GM12878 (cell line): ENCODE measurements at regions of chr1 and their contacts with region 1.

Region 1: DNA sequence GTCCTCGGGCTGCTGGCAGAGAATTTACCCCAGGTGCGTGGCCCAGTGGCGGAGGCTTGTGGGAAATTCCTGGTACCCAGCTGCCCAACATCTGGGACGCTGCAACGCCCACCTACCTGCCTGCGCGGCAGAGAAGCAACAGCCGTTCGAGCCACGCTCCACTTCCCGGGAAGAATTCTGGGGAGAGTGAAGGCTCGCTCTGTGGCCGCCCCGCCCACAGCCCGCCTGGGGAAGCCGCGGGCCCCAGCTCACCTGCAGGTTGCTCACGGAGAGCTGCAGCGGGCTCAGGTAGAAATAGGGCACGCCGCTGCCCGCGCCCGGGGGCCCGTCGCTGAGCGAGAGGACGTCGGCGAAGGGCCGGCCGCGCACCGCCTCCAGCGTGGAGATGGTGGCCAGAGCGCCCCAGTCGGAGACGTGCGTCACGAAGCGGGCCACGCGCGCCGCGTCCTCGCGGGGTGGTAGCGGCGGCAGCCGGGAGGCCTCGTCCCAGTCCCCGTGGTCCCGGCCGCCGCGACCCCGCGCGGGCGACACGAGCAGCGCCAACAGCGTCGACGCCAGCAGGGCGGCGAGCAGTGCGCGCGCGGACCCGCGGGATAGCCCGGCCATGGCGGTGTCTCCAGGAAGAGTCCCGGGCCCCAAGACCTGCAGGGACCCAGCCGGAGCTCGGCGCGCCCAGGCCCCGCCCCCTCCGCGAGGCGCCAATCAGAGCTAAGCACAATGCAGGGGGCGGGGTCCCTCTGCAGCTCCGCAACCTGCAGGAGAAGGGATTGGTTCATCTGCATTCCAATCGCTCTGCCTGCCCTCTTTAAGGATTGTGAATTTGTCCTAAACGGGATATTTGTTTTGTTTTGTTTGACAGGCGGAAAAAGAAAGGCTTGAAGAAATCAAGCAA is at the start of gene CREG1:
- DNase-seq: no peak
- ATAC-seq: peak; percentile 97
- H3K4me3 ChIP-seq: peak within 1 kb of the TSS; percentile 72
- H3K27ac ChIP-seq: peak within 1 kb of the TSS; percentile 51
- H3K4me1 ChIP-seq: peaks cover 9% of the 10 kb centered on the region
- H3K27me3 ChIP-seq: no peaks in the 10 kb centered on the region
- CTCF ChIP-seq: no peak
- EP300 ChIP-seq: no peak
- POLR2A ChIP-seq: peak; percentile 93
- RAD21 ChIP-seq: no peak
- polyA plus RNA-seq, gene CREG1: 5.3 to 11.3 TPM

Region 2: GRCh38 chr1:167510244-167510643 is 43.1 kb before region 1 on chr1:
- CTCF ChIA-PET with region 1: no interaction called
- POLR2A ChIA-PET with region 1: no interaction called
- RAD21 ChIA-PET with region 1: no interaction called
- SMC1A ChIA-PET with region 1: no interaction called
- in situ Hi-C with region 1: no loop called
- intact Hi-C with region 1: no loop called
- DNase-seq: no peak
- ATAC-seq: no peak
- H3K4me3 ChIP-seq: no peak overlapping the region
- H3K27ac ChIP-seq: no peak overlapping the region
- H3K4me1 ChIP-seq: no peaks in the 10 kb centered on the region
- H3K27me3 ChIP-seq: no peaks in the 10 kb centered on the region; a peak in 1 of 4 replicates
- CTCF ChIP-seq: no peak
- EP300 ChIP-seq: no peak
- POLR2A ChIP-seq: no peak
- RAD21 ChIP-seq: no peak

Region 3: DNA sequence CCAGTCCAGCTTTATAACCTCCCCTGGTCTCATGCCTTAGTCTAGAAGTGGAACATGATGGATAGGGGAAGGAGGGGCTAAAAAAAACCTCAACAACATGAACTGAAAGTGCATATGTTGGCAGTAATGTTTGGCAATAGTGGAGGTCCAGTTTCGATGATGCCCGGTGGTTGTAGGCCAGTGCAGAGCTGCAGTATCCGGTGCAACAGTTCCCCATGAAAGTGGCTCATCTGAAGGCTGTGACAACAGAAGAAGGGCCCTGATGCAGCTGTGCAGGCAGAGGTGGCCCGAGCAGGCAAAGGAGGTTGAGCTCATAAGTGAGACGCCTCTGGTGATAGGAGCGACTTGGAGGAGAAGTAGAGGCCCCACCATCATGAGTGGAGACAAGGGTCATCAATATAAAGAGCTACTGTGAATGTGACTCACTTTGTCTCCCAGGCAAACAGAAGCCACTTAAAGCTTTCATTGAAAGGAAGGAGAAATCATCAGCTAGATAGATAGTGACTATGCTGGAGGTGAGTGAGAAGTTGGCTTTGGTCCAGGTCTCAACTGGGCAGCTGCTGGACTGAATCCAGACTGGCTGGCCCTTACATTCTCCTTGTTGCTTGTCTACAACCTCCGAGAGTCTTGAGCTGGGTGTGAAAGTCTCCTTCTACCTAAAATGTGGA is 10.3 kb after region 1 on chr1:
- CTCF ChIA-PET with region 1: interaction called, 14 read pairs
- POLR2A ChIA-PET with region 1: interaction called, 7 read pairs
- RAD21 ChIA-PET with region 1: interaction called, 3 read pairs
- SMC1A ChIA-PET with region 1: interaction called, 15 read pairs
- in situ Hi-C with region 1: no loop called
- intact Hi-C with region 1: no loop called
- DNase-seq: no peak
- ATAC-seq: peak; percentile 21; the same call in 2 of the 3 replicates
- H3K4me3 ChIP-seq: no peak overlapping the region
- H3K27ac ChIP-seq: no peak overlapping the region
- H3K4me1 ChIP-seq: peaks cover 8% of the 10 kb centered on the region; the same call in 1 of the 2 replicates
- H3K27me3 ChIP-seq: no peaks in the 10 kb centered on the region
- CTCF ChIP-seq: no peak
- EP300 ChIP-seq: no peak
- POLR2A ChIP-seq: no peak
- RAD21 ChIP-seq: no peak

Region 4: DNA sequence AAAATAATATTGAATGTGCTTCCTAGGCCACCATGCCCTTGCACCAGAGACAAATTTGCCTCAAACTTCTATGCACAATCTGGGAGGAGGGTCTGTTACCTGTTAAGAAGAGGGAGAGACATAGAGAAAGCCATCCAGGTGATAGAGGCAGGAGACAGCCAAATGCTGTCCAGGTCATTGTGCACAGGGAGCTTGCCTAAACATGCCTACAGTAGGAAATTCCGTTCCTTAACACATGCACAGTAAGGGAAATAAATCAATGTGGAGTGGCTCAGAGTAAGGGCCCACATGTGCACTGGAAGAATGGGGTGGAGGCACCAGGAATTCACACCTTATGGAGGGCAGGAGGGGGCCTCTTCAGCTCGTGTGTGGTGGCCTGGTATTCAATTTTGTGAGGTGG is 19.6 kb after region 1 on chr1:
- CTCF ChIA-PET with region 1: interaction called, 10 read pairs
- POLR2A ChIA-PET with region 1: no interaction called
- RAD21 ChIA-PET with region 1: interaction called, 3 read pairs
- SMC1A ChIA-PET with region 1: no interaction called
- in situ Hi-C with region 1: no loop called
- intact Hi-C with region 1: no loop called
- DNase-seq: no peak
- ATAC-seq: no peak
- H3K4me3 ChIP-seq: no peak overlapping the region
- H3K27ac ChIP-seq: no peak overlapping the region
- H3K4me1 ChIP-seq: no peaks in the 10 kb centered on the region
- H3K27me3 ChIP-seq: no peaks in the 10 kb centered on the region
- CTCF ChIP-seq: no peak
- EP300 ChIP-seq: no peak
- POLR2A ChIP-seq: no peak
- RAD21 ChIP-seq: no peak

Region 5: DNA sequence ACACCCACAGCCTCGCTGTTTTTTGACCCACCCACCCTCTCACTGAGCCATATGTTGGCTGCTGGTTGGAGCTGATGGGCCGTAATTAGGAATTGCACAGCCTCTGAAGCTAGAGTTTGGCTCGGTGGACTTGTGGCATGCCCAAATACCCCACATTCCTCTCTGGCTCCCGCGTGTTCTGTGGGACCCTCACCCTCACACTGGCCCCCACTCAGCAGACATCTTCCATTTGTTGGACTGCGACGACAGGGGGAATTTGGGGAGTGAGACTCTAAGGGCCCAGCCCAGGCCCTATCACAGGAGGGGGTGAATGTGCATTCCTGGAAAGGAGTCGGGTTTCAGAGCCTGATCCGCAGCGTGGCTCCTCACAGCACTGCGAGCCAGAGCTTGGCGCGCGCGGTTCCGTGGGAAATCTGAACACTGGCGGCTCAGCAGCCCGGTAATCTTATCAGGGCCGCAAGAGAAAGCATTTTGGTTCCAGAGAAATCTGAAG is 81.8 kb after region 1 on chr1:
- CTCF ChIA-PET with region 1: interaction called, 10 read pairs
- POLR2A ChIA-PET with region 1: interaction called, 3 read pairs
- RAD21 ChIA-PET with region 1: interaction called, 5 read pairs
- SMC1A ChIA-PET with region 1: interaction called, 5 read pairs
- in situ Hi-C with region 1: no loop called
- intact Hi-C with region 1: loop called (anchors 10 kb)
- DNase-seq: no peak
- ATAC-seq: no peak
- H3K4me3 ChIP-seq: peak overlapping the region; percentile 41; the same call in 1 of the 2 replicates
- H3K27ac ChIP-seq: 0 out of 2 replicates have a peak overlapping the region, but pooled peaks have one; percentile 79
- H3K4me1 ChIP-seq: peaks cover 43% of the 10 kb centered on the region
- H3K27me3 ChIP-seq: no peaks in the 10 kb centered on the region
- CTCF ChIP-seq: no peak
- EP300 ChIP-seq: no peak
- POLR2A ChIP-seq: no peak
- RAD21 ChIP-seq: no peak